ENCODE measurements at regions of chr10 and their contacts with region 1.

Region 1: DNA sequence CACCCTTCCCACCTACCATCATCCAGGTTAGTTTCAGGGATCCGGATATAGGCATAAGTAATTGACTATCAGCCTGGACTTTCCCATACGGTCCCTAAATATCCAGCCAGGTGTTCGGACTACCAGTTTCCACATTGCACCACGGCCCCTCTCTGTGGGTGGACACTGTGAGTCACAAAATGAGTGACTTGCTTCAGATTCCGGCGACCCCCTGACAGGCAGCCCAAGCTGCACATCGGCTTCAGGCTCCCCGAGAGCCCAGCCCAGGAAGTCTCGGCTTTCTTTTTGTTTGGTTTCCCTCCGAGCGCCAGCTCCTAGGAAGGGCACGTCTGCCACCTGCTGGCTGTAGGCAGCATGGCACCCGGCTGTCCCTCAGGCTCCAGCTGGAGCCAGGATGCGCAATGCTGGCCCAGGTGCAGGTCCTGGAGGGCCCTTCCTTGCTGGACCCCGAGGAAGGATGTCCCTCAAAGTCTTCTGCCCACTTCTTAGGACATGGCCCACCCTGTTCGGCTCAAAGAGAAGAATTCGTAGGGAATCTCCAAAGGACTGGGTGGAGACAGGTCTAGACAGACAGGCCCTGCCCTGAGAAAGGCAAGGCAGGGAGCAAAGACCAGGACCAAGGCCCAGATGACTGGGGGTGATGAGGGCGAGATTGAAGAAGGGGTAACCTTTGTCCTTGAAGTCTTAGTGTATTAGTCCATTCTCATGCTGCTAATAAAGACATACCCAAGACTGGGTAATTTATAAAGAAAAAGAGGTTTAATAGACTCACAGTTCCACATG is 10.6 kb downstream of the HABP2 start:
- DNase-seq: peak; percentile 81
- H3K4me3 Mint-ChIP-seq: peak overlapping the region; percentile 57
- H3K27ac Mint-ChIP-seq: no peak overlapping the region
- H3K4me1 Mint-ChIP-seq: peaks cover 2% of the 10 kb centered on the region
- H3K27me3 Mint-ChIP-seq: no peaks in the 10 kb centered on the region

Region 2: DNA sequence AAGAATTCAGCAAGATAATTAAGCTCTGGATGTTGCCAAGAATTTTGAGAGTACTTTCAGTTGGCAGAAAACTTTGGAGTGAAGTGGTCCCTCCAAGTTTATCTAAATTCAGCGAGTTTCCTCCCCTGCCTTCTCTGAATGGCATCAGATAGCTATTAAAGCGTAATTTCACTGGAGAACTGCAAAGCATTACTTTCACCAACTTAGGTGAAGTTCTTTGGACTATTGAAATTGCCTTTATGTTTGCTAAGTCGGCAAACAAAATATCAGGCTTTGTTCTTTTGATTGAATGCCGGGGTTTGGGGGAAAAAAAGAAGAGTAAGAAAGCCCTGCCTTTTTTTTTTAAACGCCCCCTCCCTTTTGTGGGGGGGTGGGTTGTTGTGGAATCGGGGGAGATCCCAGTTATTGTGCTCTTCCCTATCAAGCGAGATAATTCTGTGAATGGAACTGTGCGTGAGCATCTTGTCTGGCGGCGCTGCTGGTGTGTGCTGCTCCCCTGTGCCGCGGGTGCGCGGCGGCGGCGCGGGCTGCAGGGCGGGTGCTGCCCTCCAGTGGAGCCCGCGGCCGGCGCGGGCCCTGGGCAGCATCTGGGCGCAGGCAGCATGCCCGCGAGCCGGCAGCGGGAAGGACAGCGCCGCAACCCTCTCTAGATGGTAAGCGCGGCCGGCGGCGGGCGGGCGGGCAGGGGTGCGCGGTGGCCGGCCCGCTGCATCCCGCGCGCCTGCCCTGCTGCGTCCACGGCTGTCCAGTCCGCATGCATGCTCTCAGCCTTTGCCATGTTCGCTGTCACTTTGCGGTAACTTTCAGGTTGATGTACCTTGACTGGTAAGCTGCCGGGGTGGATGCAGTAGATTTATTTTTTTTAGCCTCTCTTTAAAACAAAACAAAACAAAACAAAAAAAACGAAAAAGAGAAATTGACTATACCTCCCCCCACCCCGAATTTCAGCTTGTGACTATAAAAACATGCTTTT is 437.0 kb before region 1 on chr10:
- CTCF ChIA-PET with region 1: no interaction called
- intact Hi-C with region 1: loop called (anchors 5 kb)
- DNase-seq: peak; percentile 60
- H3K4me3 Mint-ChIP-seq: no peak overlapping the region
- H3K27ac Mint-ChIP-seq: no peak overlapping the region
- H3K4me1 Mint-ChIP-seq: peaks cover 4% of the 10 kb centered on the region
- H3K27me3 Mint-ChIP-seq: peaks cover 45% of the 10 kb centered on the region

Region 3: DNA sequence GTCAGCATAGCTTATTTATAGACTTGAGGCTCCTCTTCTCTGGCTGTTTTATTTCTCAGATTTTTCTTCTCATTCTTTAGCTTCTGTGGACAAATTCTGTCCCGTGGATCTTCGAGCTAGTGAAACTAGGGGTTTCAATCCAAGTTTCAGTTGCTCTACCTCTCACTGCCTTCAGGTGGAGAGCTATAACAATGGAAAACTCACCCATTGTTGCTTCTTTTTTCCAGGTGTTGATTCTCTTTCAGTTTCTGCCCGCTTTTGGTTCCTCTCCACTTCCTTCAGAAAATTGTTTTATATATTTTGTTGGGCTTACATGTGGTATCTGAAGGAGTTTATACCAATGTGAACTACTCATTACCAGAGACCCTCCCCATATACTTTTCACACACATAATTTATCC is 347.4 kb before region 1 on chr10:
- CTCF ChIA-PET with region 1: no interaction called
- intact Hi-C with region 1: loop called (anchors 1 kb)
- DNase-seq: no peak
- H3K4me3 Mint-ChIP-seq: no peak overlapping the region
- H3K27ac Mint-ChIP-seq: no peak overlapping the region
- H3K4me1 Mint-ChIP-seq: no peaks in the 10 kb centered on the region
- H3K27me3 Mint-ChIP-seq: peaks cover 23% of the 10 kb centered on the region

Region 4: GRCh38 chr10:113454341-113455061 is 109.0 kb before region 1 on chr10:
- CTCF ChIA-PET with region 1: interaction called, 4 read pairs
- intact Hi-C with region 1: loop called (anchors 5 kb)
- DNase-seq: peak; percentile 42
- H3K4me3 Mint-ChIP-seq: no peak overlapping the region
- H3K27ac Mint-ChIP-seq: no peak overlapping the region
- H3K4me1 Mint-ChIP-seq: no peaks in the 10 kb centered on the region
- H3K27me3 Mint-ChIP-seq: peaks cover 14% of the 10 kb centered on the region

Region 5: GRCh38 chr10:113521123-113521795 is 42.2 kb before region 1 on chr10:
- CTCF ChIA-PET with region 1: interaction called, 5 read pairs
- intact Hi-C with region 1: loop called (anchors 1 kb)
- DNase-seq: peak; percentile 58
- H3K4me3 Mint-ChIP-seq: no peak overlapping the region
- H3K27ac Mint-ChIP-seq: no peak overlapping the region
- H3K4me1 Mint-ChIP-seq: no peaks in the 10 kb centered on the region
- H3K27me3 Mint-ChIP-seq: peaks cover 8% of the 10 kb centered on the region

Region 6: GRCh38 chr10:113661332-113661731 is 97.8 kb after region 1 on chr10:
- CTCF ChIA-PET with region 1: no interaction called
- intact Hi-C with region 1: no loop called
- DNase-seq: no peak
- H3K4me3 Mint-ChIP-seq: no peak overlapping the region
- H3K27ac Mint-ChIP-seq: no peak overlapping the region
- H3K4me1 Mint-ChIP-seq: no peaks in the 10 kb centered on the region
- H3K27me3 Mint-ChIP-seq: peaks cover 7% of the 10 kb centered on the region